Right ventricle myocardium inferior (tissue), 1 donor: ENCODE measurements at regions of chr11 and their contacts with region 1.

Region 1: GRCh38 chr11:14422052-14422813 is 63.2 kb upstream of the RRAS2 start:
- DNase-seq: peak; percentile 86
- ATAC-seq: peak; percentile 99

Region 2: DNA sequence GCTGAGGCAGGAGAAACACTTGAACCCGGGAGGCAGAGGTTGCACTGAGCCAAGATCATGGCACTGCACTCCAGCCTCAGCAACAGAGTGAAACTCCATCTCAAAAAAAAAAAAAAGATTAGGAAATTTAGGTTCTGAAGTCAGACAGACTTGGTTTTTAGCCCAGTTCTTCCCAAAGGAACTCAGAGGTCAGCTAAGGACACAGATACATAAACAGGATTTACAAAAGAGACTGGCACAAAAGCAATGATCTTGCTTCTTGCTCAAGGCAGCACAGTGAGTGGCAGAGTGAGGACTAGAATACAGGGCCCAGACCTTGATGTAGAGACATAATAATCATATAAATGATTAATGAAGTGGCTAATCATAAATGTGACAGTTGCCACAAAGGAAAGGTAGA is 37.9 kb before region 1 on chr11:
- intact Hi-C with region 1: loop called (anchors 2 kb)
- DNase-seq: no peak
- ATAC-seq: no peak